Activated naive CD8-positive, alpha-beta T cell treated with anti-CD3 and anti-CD28 coated beads, Interleukin-2, amount 10 ng/mL, durations not matched to agents 7 days and 5 days (primary cell): ENCODE measurements at regions of chr1 and their contacts with region 1.

Region 1: DNA sequence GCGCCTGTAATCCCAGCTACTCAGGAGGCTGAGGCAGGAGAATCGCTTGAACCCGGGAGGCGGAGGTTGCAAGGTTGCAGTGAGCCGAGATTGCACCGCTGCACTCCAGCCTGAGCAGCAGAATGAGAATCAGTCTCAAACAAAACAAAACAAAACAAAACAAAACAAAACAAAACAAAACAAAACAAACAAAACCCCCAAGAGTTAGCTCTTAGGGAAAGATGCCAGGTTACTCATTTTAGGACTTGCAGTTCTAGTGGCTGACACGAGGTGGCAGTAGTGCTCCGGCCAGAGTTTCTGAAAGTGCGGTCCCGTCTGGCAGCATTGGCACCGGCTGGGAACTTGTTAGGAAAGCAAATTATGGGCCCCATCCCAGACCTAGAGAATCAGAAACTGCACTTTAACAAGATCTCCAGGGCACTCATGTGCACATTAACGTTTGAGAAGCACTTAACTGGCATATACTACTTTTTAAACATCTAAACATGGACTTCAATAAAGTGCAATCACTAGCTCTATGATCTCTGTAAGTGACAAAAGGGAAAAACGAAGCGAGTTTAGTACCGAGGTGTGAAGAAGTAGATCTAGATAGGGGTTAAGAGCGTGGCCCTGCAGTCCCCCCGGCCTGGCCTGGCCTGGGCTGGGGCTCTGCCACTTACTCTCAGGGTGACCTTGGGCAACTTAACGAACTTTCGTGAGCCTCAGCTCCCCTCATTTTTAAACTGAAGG is 41.9 kb upstream of the TNFRSF1B start:
- DNase-seq: peak; percentile 81
- ATAC-seq: peak; percentile 31
- H3K4me3 Mint-ChIP-seq: peak overlapping the region; percentile 50
- H3K27ac Mint-ChIP-seq: peak overlapping the region; percentile 85
- H3K4me1 Mint-ChIP-seq: peaks cover 32% of the 10 kb centered on the region
- H3K27me3 Mint-ChIP-seq: peaks cover 13% of the 10 kb centered on the region

Region 2: DNA sequence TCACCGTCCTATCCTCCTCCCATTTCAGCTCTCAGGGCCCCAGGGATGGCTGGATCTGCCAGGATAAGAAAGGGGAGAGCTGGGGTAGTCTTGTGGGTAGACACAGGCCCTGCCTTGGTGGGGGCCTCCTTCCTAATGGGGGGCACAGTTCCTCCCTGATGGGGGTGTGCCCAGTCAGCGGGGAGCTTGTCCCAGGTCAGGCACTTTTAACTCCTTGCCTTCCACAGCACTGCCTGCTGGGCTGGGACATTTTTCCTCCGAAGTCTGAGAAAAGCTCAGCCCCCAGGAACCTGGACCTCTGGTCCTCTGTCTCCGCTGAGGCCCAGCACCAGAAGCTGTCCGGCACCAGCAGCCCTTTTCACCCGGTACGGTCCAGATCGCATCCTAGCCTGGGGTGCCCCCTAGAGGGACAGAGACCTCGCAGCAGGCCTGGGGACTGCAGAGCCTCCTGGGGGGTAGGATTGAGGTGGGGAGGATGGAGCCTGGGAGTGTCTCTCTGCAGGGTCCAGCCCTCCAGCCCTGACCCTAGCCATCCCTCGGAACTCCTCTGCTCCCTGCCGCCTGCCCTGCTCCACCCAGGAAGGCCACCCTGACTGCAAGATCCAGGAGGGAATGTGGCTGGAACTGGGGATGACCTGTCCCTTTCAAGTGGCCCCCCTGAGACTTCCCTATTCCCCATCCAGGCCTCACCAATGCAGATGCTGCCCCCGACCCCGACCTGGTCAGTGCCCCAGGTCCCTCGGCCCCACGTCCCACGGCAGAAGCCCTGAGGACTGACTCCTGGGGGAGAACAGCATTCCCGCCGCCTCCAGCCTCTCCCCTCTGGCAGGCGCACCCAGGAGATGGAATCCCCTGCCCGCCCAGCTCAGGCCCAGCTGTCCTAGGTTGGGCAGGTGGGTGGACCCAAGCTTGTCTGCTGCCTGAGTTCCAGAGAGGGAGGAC is 93.5 kb before region 1 on chr1:
- POLR2A ChIA-PET with region 1: no interaction called
- DNase-seq: peak; percentile 60
- ATAC-seq: peak; percentile 75
- H3K4me3 Mint-ChIP-seq: no peak overlapping the region
- H3K27ac Mint-ChIP-seq: no peak overlapping the region
- H3K4me1 Mint-ChIP-seq: no peaks in the 10 kb centered on the region
- H3K27me3 Mint-ChIP-seq: no peaks in the 10 kb centered on the region

Region 3: GRCh38 chr1:12067900-12068821 is 56.7 kb before region 1 on chr1:
- POLR2A ChIA-PET with region 1: no interaction called
- DNase-seq: no peak
- ATAC-seq: peak; percentile 39
- H3K4me3 Mint-ChIP-seq: no peak overlapping the region
- H3K27ac Mint-ChIP-seq: no peak overlapping the region
- H3K4me1 Mint-ChIP-seq: peaks cover 36% of the 10 kb centered on the region
- H3K27me3 Mint-ChIP-seq: peaks cover 59% of the 10 kb centered on the region

Region 4: DNA sequence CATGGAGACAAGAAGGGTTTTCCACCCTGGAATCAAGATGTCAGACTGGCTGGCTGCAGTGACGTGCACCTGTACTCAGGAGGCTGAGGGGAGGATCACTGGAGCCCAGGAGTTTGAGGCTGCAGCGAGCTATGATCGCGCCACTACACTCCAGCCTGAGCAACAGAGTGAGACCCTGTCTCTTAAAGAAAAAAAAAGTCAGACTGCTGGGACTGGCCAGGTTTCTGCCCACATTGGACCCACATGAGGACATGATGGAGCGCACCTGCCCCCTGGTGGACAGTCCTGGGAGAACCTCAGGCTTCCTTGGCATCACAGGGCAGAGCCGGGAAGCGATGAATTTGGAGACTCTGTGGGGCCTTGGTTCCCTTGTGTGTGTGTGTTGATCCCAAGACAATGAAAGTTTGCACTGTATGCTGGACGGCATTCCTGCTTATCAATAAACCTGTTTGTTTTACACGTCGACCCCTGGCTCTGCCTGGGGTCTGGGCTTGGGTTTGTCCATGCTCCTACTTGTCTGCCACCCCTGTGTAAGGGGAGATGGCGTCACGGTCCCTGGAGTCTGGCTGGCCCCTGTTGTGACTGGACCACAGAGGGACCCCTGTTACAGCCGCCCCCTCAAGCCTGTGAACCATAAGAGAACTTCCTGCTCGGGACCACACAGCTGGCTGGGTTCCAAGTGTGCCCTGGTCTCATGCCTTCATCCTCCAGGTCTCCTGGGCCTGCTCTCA is 84.1 kb after region 1 on chr1:
- POLR2A ChIA-PET with region 1: interaction called, 29 read pairs
- DNase-seq: peak; percentile 86
- ATAC-seq: peak; percentile 51
- H3K4me3 Mint-ChIP-seq: no peak overlapping the region
- H3K27ac Mint-ChIP-seq: peak overlapping the region; percentile 74
- H3K4me1 Mint-ChIP-seq: peaks cover 39% of the 10 kb centered on the region
- H3K27me3 Mint-ChIP-seq: no peaks in the 10 kb centered on the region